GM10248 (cell line): ENCODE measurements at regions of chr17 and their contacts with region 1.

Region 1: GRCh38 chr17:74736513-74737298 is at the start of gene RAB37:
- DNase-seq: peak; percentile 75
- CTCF ChIP-seq: peak; percentile 79

Region 2: DNA sequence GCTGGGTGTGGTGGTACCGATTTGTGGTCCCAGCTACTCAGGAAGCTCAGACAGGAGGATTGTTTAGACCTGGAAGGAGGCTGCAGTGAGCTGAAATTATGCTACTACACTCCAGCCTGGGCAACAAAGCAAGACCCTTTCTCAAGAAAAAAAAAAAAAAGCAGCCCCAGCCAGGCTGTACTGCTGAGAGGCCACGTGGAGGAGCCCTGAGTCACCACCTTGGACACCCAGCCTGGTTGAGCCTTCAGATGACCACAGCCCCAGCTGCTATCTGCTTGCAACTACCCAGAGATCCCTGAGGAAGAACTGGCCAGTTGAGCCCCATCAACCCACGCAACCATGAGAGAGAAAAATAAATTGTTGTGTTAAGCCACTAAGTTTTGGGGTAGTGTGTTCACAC is 328.4 kb before region 1 on chr17:
- CTCF ChIA-PET with region 1: no interaction called
- POLR2A ChIA-PET with region 1: no interaction called
- DNase-seq: no peak
- CTCF ChIP-seq: no peak

Region 3: GRCh38 chr17:74566132-74566753 is 170.5 kb before region 1 on chr17:
- CTCF ChIA-PET with region 1: interaction called, 14 read pairs
- POLR2A ChIA-PET with region 1: no interaction called
- DNase-seq: peak; percentile 55
- CTCF ChIP-seq: peak; percentile 58

Region 4: GRCh38 chr17:74646231-74646630 is 90.5 kb before region 1 on chr17:
- CTCF ChIA-PET with region 1: interaction called, 22 read pairs
- POLR2A ChIA-PET with region 1: no interaction called
- DNase-seq: peak; percentile 66
- CTCF ChIP-seq: peak; percentile 79

Region 5: DNA sequence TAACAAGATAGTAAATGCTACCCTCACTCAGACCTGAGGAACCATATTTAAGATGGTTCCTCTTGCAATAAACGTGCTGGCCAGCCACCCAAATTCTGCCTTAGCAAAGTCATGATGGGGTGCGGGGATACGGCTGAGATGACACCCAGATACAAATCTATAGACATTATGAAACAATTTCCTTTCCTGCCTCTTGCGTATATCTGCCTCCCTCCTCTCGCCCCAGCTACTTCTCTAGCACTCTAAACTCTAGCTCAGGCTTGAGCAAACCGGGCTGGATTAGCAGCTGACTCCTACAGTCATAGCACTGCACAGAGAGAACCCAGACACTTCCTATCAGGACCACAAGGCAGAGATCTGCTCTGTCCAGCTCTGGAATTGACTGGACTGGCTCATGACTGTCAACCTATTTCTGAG is 46.3 kb before region 1 on chr17:
- CTCF ChIA-PET with region 1: interaction called, 12 read pairs
- POLR2A ChIA-PET with region 1: no interaction called
- DNase-seq: no peak
- CTCF ChIP-seq: no peak

Region 6: GRCh38 chr17:74748529-74749365 is 12.0 kb after region 1 on chr17 and contains the start of gene NHERF1:
- CTCF ChIA-PET with region 1: interaction called, 47 read pairs
- POLR2A ChIA-PET with region 1: interaction called, 9 read pairs
- DNase-seq: peak; percentile 99
- CTCF ChIP-seq: peak; percentile 19

Region 7: GRCh38 chr17:74770498-74771318 is 34.0 kb after region 1 on chr17:
- CTCF ChIA-PET with region 1: interaction called, 19 read pairs
- POLR2A ChIA-PET with region 1: no interaction called
- DNase-seq: peak; percentile 75
- CTCF ChIP-seq: peak; percentile 95

Region 8: DNA sequence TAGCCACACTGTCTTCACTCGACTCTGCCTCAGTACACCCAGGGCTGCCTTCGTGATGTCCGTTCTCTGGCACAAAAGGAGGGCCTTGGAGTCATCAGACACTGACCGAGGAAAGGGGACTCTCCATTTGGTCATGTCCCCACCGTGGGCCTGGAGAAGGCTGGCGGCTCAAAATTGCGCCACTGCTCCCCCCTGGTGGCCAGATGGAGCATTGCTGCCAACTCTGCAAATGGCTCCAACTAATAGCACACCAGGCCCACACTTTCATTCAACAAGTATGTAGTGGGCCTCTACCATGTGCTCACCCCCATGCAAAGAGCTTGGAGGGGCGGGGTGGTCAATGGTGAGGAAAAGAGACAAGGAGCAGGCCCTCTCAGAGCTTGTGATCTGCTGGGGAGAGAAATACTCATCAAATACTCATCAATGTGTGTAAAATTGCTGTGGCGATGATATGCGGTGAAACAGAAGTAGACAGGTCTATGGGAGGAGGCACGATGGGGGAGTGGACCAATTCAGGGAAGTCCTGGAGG is 128.2 kb after region 1 on chr17:
- CTCF ChIA-PET with region 1: interaction called, 38 read pairs
- POLR2A ChIA-PET with region 1: no interaction called
- DNase-seq: peak; percentile 85
- CTCF ChIP-seq: peak; percentile 93